ENCODE measurements at regions of chr14 and their contacts with region 1.

Region 1: GRCh38 chr14:51189600-51190375 is 50.3 kb upstream of the TMX1 start:
- DNase-seq: peak in 4 of 42 donors; percentile 11 to 46 (median 24)

Region 2: GRCh38 chr14:51147183-51147582 is 42.6 kb before region 1 on chr14:
- intact Hi-C with region 1: loop called (anchors 10 kb)
- DNase-seq: no peak

Measured in head of caudate nucleus (tissue), 42 donors.